Left cardiac atrium (tissue), 4 donors: ENCODE measurements at regions of chr3 and their contacts with region 1.

Region 1: GRCh38 chr3:24582431-24583403 is 88.1 kb upstream of the THRB start:
- DNase-seq: no peak
- ATAC-seq: no peak

Region 2: DNA sequence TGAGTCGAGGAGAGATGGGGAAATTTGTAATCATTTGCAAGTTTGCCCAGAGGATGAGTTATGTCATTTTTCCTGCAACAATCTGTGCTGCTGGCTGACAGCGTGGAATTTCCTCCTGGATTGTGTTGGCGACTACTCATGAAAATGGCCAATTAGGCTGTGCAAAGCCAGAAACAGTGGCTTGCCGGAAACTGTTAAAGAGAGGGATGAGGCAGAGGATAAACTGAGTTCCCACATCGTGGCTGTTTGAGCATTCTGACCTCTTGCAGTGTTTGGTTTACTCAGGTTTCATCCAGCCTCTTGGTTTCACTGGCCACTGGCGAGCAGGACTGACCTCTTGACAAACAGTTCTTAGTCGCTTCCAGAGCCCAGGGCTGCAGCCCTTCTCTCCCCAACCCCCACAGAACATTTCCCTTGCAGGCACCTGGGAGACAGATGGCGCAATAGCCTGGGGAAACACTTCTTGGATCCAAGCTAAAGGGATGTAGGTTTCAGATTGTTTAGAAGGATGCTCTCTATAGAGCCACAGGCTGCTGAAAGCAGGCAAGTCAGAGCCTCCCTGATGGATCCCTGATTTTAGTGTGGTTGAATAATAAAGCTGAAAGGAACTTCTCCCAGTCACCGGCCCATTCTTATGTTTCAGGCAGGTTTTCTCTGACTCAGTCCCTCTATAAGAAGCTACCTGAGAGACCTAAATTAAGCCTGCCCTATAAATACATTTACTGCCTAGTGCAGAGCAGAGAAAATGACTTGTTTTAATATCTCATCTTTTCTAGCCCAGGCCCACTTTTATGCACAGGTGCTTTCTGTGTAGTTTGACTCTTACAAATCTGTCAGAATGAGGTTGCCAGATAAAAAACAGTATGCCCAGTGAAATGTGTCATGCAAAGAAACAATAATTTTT is 869.8 kb before region 1 on chr3:
- intact Hi-C with region 1: no loop called
- DNase-seq: peak; percentile 57
- ATAC-seq: peak; percentile 74 to 76

Region 3: DNA sequence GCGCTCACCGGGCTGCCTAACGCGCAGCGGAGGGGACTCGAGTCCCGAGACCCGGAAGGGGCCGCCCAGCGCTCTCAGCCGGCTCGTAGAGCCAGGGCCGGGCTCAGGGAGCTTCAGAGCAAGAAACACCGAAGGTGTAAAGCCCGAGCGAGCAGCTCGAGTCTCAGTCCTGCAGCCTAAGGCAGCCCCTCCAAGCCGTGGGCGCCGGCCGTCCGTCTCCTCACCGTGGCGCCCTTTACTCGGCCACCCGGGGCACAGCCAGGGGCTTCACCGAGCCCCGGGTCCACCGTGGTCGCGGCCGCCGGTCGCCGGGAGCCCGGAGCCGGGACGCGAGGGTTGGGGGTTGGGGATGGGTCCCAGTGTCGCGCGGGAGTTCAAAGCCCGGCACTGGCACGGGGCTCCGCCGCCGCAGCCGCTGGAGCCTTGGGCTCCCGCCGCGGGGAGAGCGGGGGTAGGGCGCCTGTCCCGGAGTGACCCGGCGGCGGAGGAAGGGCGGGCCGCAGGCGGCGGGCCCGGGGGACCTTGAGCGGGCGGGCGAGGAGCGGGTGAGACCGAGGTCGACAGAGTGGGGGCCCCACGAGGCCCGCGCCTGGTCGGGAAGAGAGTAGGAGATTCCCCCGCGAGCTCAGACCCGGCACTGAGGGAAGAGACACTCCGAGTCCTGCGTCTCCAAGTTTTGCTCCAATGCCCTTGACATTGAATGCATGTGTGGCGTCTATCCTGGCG is 61.1 kb before region 1 on chr3:
- intact Hi-C with region 1: loop called in 1 of 2 experiments (anchors 5 kb)
- DNase-seq: peak; percentile 71
- ATAC-seq: peak; percentile 95 to 96